ENCODE measurements at regions of chr1 and their contacts with region 1.

Region 1: GRCh38 chr1:48498096-48498791 is 26.2 kb upstream of the SPATA6 start:
- DNase-seq: peak; percentile 73
- H3K4me3 Mint-ChIP-seq: no peak overlapping the region
- H3K27ac Mint-ChIP-seq: no peak overlapping the region
- H3K4me1 Mint-ChIP-seq: peaks cover 18% of the 10 kb centered on the region
- H3K27me3 Mint-ChIP-seq: no peaks in the 10 kb centered on the region
- CTCF ChIP-seq: peak; percentile 78

Region 2: GRCh38 chr1:47013239-47013845 is 1484.9 kb before region 1 on chr1:
- CTCF ChIA-PET with region 1: no interaction called
- POLR2A ChIA-PET with region 1: no interaction called
- intact Hi-C with region 1: no loop called
- DNase-seq: peak; percentile 74
- H3K4me3 Mint-ChIP-seq: no peak overlapping the region
- H3K27ac Mint-ChIP-seq: peak overlapping the region; percentile 28
- H3K4me1 Mint-ChIP-seq: peaks cover 18% of the 10 kb centered on the region
- H3K27me3 Mint-ChIP-seq: no peaks in the 10 kb centered on the region
- CTCF ChIP-seq: no peak

Region 3: GRCh38 chr1:48093696-48094528 is 404.3 kb before region 1 on chr1:
- CTCF ChIA-PET with region 1: interaction called, 7 read pairs
- POLR2A ChIA-PET with region 1: no interaction called
- intact Hi-C with region 1: loop called (anchors 1 kb)
- DNase-seq: peak; percentile 79
- H3K4me3 Mint-ChIP-seq: peak overlapping the region; percentile 73
- H3K27ac Mint-ChIP-seq: no peak overlapping the region
- H3K4me1 Mint-ChIP-seq: peaks cover 18% of the 10 kb centered on the region
- H3K27me3 Mint-ChIP-seq: peaks cover 67% of the 10 kb centered on the region
- CTCF ChIP-seq: peak; percentile 79

Region 4: GRCh38 chr1:48356901-48357300 is 141.3 kb before region 1 on chr1:
- CTCF ChIA-PET with region 1: interaction called, 12 read pairs
- POLR2A ChIA-PET with region 1: no interaction called
- intact Hi-C with region 1: loop called (anchors 5 kb)
- DNase-seq: no peak
- H3K4me3 Mint-ChIP-seq: no peak overlapping the region
- H3K27ac Mint-ChIP-seq: no peak overlapping the region
- H3K4me1 Mint-ChIP-seq: no peaks in the 10 kb centered on the region
- H3K27me3 Mint-ChIP-seq: no peaks in the 10 kb centered on the region
- CTCF ChIP-seq: no peak

Region 5: GRCh38 chr1:48450505-48450904 is 47.7 kb before region 1 on chr1:
- CTCF ChIA-PET with region 1: interaction called, 19 read pairs
- POLR2A ChIA-PET with region 1: no interaction called
- intact Hi-C with region 1: no loop called
- DNase-seq: peak; percentile 4
- H3K4me3 Mint-ChIP-seq: no peak overlapping the region
- H3K27ac Mint-ChIP-seq: no peak overlapping the region
- H3K4me1 Mint-ChIP-seq: no peaks in the 10 kb centered on the region
- H3K27me3 Mint-ChIP-seq: no peaks in the 10 kb centered on the region
- CTCF ChIP-seq: no peak

Region 6: DNA sequence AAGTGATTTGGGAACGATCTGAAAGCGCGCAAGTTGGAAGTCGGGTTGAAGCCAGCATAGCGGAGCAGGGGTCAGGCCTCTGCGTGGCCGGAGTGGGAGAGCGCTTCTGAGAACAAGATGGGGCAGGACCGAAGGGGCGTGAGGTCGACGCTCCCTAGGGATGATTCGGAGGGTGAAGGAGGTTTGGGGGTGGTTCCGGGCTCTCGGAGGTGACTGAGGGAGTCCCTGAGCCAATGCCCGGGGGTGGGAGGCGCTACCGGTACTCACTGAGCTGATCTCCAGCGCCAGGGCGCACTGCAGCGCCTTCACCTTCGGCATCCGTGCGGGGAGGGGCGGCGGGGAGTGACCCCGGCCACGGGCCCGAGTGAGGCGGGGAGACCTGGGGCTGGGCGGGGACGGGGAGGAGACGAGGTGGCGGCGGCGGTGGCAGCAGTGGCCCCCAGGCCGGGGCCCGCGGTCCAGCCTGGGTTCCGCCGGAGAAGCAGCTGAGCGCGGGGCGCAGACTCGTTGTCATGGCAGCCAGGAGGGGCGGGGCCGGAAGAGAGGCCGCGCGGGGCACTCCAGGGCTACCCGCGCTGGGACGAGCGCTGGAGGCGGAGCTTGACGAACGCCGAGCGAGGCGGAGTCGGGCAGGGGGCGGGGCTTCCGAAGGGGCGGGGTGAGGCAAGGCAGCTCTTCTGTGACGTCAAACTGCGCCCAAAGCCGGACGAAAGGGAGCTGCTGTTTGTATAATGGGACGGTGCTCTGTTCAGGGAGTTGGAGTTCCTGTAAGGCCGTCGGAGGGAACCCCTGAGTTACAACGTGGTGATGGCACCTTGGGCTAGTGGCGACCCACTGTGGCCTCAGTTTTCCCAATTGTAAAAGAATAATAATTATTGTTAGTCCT is 26.3 kb before region 1 on chr1 and contains the start of gene SPATA6:
- CTCF ChIA-PET with region 1: interaction called, 7 read pairs
- POLR2A ChIA-PET with region 1: interaction called, 10 read pairs
- intact Hi-C with region 1: loop called (anchors 2 kb)
- DNase-seq: peak; percentile 94
- H3K4me3 Mint-ChIP-seq: peak within 1 kb of the TSS; percentile 82
- H3K27ac Mint-ChIP-seq: peak within 1 kb of the TSS; percentile 93
- H3K4me1 Mint-ChIP-seq: peaks cover 19% of the 10 kb centered on the region
- H3K27me3 Mint-ChIP-seq: no peaks in the 10 kb centered on the region
- CTCF ChIP-seq: no peak
- total RNA-seq, gene SPATA6: 4.2 and 6.9 TPM in 2 replicates